ENCODE measurements at regions of chr3 and their contacts with region 1.

Region 1: DNA sequence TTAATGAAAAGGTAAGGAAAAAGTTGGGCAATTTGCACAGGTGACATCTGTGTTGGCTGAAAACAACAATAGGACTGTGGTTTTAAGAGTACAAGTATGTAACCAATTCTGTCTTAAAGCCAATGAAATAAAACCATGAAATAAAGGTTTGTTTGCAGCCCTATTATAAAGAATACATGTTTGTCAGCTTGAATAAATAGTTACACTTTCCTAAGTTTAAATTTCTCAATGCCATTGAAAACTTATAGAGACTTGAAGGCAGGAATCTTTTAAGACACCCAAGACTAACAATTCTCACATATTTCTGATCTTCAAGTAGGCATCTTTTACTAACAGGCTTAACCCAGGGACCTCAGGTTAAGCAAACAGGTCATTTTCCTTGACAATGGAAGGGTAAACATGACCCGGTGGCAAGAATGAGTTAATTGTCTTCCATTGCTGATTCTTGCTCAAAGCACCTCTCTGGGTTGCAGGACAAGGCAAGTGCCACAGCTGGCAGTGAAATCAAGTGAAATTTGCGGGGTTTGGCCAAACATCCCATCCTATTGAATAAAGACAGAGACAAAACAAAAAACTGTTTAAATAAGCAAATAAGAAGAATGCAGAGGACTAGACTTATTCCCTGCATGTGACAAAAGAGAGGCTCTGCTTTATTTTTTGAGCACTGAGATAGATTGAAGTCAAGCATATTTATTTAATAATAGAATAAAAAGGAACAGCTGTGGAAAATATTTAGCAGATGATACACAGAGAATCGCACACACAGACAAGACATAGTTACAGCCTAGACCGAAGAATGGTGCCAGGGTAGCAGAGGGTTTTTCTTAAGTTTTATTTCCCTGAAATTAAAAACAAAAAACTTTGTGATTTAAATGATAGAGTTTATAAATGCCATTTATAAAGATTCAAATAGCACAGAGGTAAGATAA is 56.1 kb upstream of the MITF start:
- DNase-seq: no peak
- H3K4me3 ChIP-seq: no peak overlapping the region
- H3K27ac ChIP-seq: no peak overlapping the region
- H3K4me1 ChIP-seq: no peaks in the 10 kb centered on the region
- H3K27me3 ChIP-seq: peaks cover 8% of the 10 kb centered on the region
- CTCF ChIP-seq: no peak
- POLR2A ChIP-seq: no peak

Region 2: GRCh38 chr3:69324362-69325025 is 358.6 kb before region 1 on chr3:
- intact Hi-C with region 1: no loop called
- DNase-seq: peak in 1 of 7 donors; percentile 27
- H3K4me3 ChIP-seq: no peak overlapping the region
- H3K27ac ChIP-seq: no peak overlapping the region
- H3K4me1 ChIP-seq: peaks cover 4 to 20% of the 10 kb centered on the region in 2 donors
- H3K27me3 ChIP-seq: no peaks in the 10 kb centered on the region
- CTCF ChIP-seq: no peak
- POLR2A ChIP-seq: no peak

Region 3: GRCh38 chr3:69647511-69648110 is 35.5 kb before region 1 on chr3:
- intact Hi-C with region 1: no loop called
- DNase-seq: no peak
- H3K4me3 ChIP-seq: no peak overlapping the region
- H3K27ac ChIP-seq: no peak overlapping the region
- H3K4me1 ChIP-seq: no peaks in the 10 kb centered on the region
- H3K27me3 ChIP-seq: peaks cover 6% of the 10 kb centered on the region
- CTCF ChIP-seq: no peak
- POLR2A ChIP-seq: no peak

Region 4: GRCh38 chr3:69855436-69856162 is 172.5 kb after region 1 on chr3:
- intact Hi-C with region 1: loop called in 1 of 2 experiments (anchors 10 kb)
- DNase-seq: peak in 3 of 7 donors; percentile 15 to 28 (median 25)
- H3K4me3 ChIP-seq: no peak overlapping the region
- H3K27ac ChIP-seq: no peak overlapping the region
- H3K4me1 ChIP-seq: peaks cover 0 to 15% of the 10 kb centered on the region in 2 donors
- H3K27me3 ChIP-seq: no peaks in the 10 kb centered on the region
- CTCF ChIP-seq: peak; percentile 22 to 52 (median 34)
- POLR2A ChIP-seq: no peak

Region 5: GRCh38 chr3:69941808-69942176 is 258.6 kb after region 1 on chr3:
- intact Hi-C with region 1: loop called in 1 of 2 experiments (anchors 5 kb)
- DNase-seq: no peak
- H3K4me3 ChIP-seq: no peak overlapping the region
- H3K27ac ChIP-seq: no peak overlapping the region
- H3K4me1 ChIP-seq: no peaks in the 10 kb centered on the region
- H3K27me3 ChIP-seq: no peaks in the 10 kb centered on the region
- CTCF ChIP-seq: no peak
- POLR2A ChIP-seq: no peak